Caco-2 (cell line): ENCODE measurements at regions of chr2 and their contacts with region 1.

Region 1: DNA sequence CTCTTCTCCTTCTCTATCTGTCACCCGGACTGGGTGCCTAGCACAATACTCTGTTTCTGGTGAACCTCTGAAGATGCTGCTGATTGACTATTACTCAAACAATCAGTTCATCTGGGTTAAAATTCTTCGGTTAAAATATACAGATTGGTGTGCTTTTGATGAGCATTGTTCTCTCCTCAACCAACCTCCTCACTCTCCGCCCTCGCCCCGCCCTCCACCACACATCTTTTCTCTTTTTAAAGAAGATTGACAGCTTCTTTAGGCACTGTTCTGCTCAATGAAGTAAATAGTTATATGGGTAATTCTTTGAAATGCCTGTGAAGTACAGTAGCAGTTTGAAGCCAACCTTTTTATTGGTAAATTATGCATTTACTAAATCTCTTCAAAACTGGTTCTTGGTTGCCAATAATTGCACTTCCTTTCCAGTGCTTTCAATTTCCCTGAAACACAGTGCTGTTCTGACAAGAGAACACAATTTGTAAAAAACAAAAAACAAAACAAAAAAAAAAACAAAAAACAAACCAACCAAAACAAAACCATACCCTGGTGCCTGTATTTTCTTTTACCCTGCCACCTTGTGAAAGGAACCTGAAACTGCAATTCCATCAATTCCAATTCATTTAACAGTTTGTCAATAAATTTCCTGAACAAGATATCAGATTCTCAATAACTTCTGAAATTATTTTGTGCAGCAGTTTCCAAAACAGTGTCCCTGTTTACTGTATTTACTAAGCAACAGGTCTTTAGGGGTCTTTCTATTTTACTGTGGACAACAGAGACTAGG is 188.6 kb downstream of the LRP1B start:
- DNase-seq: no peak
- H3K4me3 ChIP-seq: no peak overlapping the region
- H3K4me3 Mint-ChIP-seq: no peak overlapping the region
- H3K27ac Mint-ChIP-seq: no peak overlapping the region
- H3K4me1 ChIP-seq: no peaks in the 10 kb centered on the region
- H3K4me1 Mint-ChIP-seq: no peaks in the 10 kb centered on the region
- H3K27me3 ChIP-seq: no peaks in the 10 kb centered on the region
- H3K27me3 Mint-ChIP-seq: no peaks in the 10 kb centered on the region
- CTCF ChIP-seq: peak; percentile 14 to 20

Region 2: GRCh38 chr2:142037744-142038143 is 95.5 kb after region 1 on chr2:
- CTCF ChIA-PET with region 1: no interaction called
- POLR2A ChIA-PET with region 1: no interaction called
- intact Hi-C with region 1: loop called (anchors 5 kb)
- DNase-seq: no peak
- H3K4me3 ChIP-seq: no peak overlapping the region
- H3K4me3 Mint-ChIP-seq: no peak overlapping the region
- H3K27ac Mint-ChIP-seq: no peak overlapping the region
- H3K4me1 ChIP-seq: no peaks in the 10 kb centered on the region
- H3K4me1 Mint-ChIP-seq: no peaks in the 10 kb centered on the region
- H3K27me3 ChIP-seq: no peaks in the 10 kb centered on the region
- H3K27me3 Mint-ChIP-seq: no peaks in the 10 kb centered on the region
- CTCF ChIP-seq: no peak

Region 3: GRCh38 chr2:142100967-142101366 is 158.8 kb after region 1 on chr2:
- CTCF ChIA-PET with region 1: no interaction called
- POLR2A ChIA-PET with region 1: no interaction called
- intact Hi-C with region 1: no loop called
- DNase-seq: no peak
- H3K4me3 ChIP-seq: no peak overlapping the region
- H3K4me3 Mint-ChIP-seq: no peak overlapping the region
- H3K27ac Mint-ChIP-seq: no peak overlapping the region
- H3K4me1 ChIP-seq: no peaks in the 10 kb centered on the region
- H3K4me1 Mint-ChIP-seq: no peaks in the 10 kb centered on the region
- H3K27me3 ChIP-seq: no peaks in the 10 kb centered on the region
- H3K27me3 Mint-ChIP-seq: no peaks in the 10 kb centered on the region
- CTCF ChIP-seq: no peak